CD4-positive, alpha-beta memory T cell (primary cell): ENCODE measurements at regions of chr7 and their contacts with region 1.

Region 1: DNA sequence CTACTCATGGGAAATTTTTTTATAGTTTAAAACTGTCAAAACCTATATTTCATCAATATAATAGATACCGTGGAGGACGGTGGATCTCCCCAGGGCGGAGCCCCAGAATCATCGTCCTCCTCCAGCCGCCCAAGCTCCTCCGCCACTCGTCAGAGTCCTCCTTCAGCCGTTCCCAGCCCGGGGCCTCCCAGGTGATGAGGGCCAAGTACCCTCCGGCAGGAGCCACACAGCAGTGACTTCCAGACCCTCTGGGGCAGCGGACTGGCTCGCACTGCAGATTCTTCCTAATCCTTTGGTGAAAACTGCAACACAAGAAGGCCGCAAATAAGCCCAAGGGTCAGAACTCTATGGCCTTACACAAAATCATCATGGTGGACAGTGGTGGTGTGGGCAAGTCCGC is 26.8 kb upstream of the ABCB5 start:
- DNase-seq: no peak
- H3K4me3 ChIP-seq: no peak overlapping the region
- H3K4me3 Mint-ChIP-seq: no peak overlapping the region
- H3K27ac ChIP-seq: no peak overlapping the region
- H3K27ac Mint-ChIP-seq: no peak overlapping the region
- H3K4me1 ChIP-seq: no peaks in the 10 kb centered on the region
- H3K4me1 Mint-ChIP-seq: no peaks in the 10 kb centered on the region
- H3K27me3 ChIP-seq: no peaks in the 10 kb centered on the region
- H3K27me3 Mint-ChIP-seq: peaks cover 0 to 4% of the 10 kb centered on the region in 2 donors

Region 2: GRCh38 chr7:20560325-20561180 is 28.1 kb before region 1 on chr7:
- CTCF ChIA-PET with region 1: no interaction called
- POLR2A ChIA-PET with region 1: no interaction called
- intact Hi-C with region 1: no loop called
- DNase-seq: peak in 1 of 5 donors; percentile 37
- H3K4me3 ChIP-seq: no peak overlapping the region
- H3K4me3 Mint-ChIP-seq: no peak overlapping the region
- H3K27ac ChIP-seq: no peak overlapping the region
- H3K27ac Mint-ChIP-seq: no peak overlapping the region
- H3K4me1 ChIP-seq: no peaks in the 10 kb centered on the region
- H3K4me1 Mint-ChIP-seq: no peaks in the 10 kb centered on the region
- H3K27me3 ChIP-seq: no peaks in the 10 kb centered on the region
- H3K27me3 Mint-ChIP-seq: no peaks in the 10 kb centered on the region

Region 3: GRCh38 chr7:20598459-20599309 is 10.0 kb after region 1 on chr7:
- CTCF ChIA-PET with region 1: interaction called, 17 read pairs
- POLR2A ChIA-PET with region 1: no interaction called
- intact Hi-C with region 1: no loop called
- DNase-seq: peak in 4 of 5 donors; percentile 27 to 38 (median 31)
- H3K4me3 ChIP-seq: no peak overlapping the region
- H3K4me3 Mint-ChIP-seq: no peak overlapping the region
- H3K27ac ChIP-seq: no peak overlapping the region
- H3K27ac Mint-ChIP-seq: peak overlapping the region in 1 of 7 donors; percentile 0
- H3K4me1 ChIP-seq: no peaks in the 10 kb centered on the region
- H3K4me1 Mint-ChIP-seq: peaks cover 0 to 6% (median 0%) of the 10 kb centered on the region in 4 donors
- H3K27me3 ChIP-seq: no peaks in the 10 kb centered on the region
- H3K27me3 Mint-ChIP-seq: peaks cover 2 to 7% of the 10 kb centered on the region in 2 donors